Naive thymus-derived CD4-positive, alpha-beta T cell (primary cell): ENCODE measurements at regions of chr9 and their contacts with region 1.

Region 1: DNA sequence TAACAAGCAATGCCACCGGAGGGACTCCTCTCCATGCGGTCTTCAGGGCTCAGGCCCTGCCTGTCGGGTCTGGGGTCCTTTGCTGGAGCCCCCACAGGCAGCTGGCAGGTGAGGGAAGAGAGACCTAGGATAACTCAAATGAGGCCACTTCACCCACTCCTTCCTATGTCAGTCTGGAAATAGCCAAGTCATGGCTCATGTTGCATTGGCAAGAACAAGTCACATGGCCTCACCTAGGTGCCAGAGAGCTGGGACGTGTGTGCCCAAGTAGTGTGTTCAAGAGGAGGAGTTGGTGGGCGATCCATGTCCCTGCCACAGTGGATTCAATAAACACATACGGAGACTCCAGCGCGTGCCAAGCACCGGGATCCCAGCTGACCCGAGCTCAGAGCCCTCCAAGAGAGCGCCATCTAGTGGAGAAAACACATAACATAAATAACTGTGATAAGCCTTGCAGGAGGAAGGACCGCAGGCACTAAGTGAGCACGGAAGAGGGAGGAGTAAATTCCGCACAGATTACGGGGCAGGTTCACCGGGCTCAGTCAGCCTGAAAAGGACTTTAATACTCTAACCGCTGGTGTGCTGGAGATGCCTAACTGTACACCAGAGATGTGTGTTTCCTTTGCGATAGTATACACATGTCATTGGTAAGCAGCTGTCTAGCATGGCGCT is 580.8 kb downstream of the CCDC171 start:
- DNase-seq: peak in 1 of 9 donors; percentile 21
- ATAC-seq: peak; percentile 73
- H3K4me3 ChIP-seq: no peak overlapping the region
- H3K4me3 Mint-ChIP-seq: no peak overlapping the region
- H3K27ac ChIP-seq: no peak overlapping the region
- H3K27ac Mint-ChIP-seq: no peak overlapping the region
- H3K4me1 ChIP-seq: no peaks in the 10 kb centered on the region
- H3K4me1 Mint-ChIP-seq: peaks cover 0 to 4% (median 0%) of the 10 kb centered on the region in 7 donors
- H3K27me3 ChIP-seq: no peaks in the 10 kb centered on the region
- H3K27me3 Mint-ChIP-seq: peaks cover 0 to 17% (median 4%) of the 10 kb centered on the region in 5 donors

Region 2: DNA sequence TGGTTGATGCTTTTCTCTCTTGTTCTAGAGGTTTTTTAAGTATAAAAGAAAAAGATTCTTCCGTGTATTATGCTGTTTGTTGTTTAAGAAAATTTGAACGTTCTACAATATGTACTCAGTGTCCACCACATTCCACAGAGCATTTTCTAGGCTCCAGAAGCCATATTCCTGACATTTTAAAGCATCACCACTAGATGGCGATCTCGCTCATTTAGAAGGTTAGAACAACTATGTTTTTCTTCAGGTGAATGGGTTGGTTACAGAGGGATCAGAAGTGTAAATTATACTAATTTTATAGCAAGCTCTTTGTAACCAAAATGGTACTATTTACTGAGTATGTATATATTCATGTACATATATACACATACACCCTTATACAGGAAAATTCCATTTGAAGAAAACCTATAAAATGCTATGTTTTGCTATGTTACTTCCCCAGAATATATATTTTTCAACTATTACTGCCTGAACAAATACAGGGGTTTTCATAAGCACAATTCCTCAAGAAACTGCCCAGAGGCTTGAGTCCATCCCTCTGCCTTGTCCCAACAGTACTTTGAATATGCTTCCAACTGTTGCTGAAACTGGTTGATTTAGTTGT is 296.5 kb before region 1 on chr9:
- CTCF ChIA-PET with region 1: no interaction called
- POLR2A ChIA-PET with region 1: no interaction called
- intact Hi-C with region 1: loop called in 1 of 2 experiments (anchors 1 kb)
- DNase-seq: peak in 5 of 9 donors; percentile 13 to 41 (median 24)
- ATAC-seq: peak; percentile 50
- H3K4me3 ChIP-seq: no peak overlapping the region
- H3K4me3 Mint-ChIP-seq: no peak overlapping the region
- H3K27ac ChIP-seq: no peak overlapping the region
- H3K27ac Mint-ChIP-seq: no peak overlapping the region
- H3K4me1 ChIP-seq: no peaks in the 10 kb centered on the region
- H3K4me1 Mint-ChIP-seq: peaks cover 0 to 4% (median 0%) of the 10 kb centered on the region in 7 donors
- H3K27me3 ChIP-seq: no peaks in the 10 kb centered on the region
- H3K27me3 Mint-ChIP-seq: no peaks in the 10 kb centered on the region

Region 3: GRCh38 chr9:15873569-15874177 is 260.0 kb before region 1 on chr9:
- CTCF ChIA-PET with region 1: no interaction called
- POLR2A ChIA-PET with region 1: no interaction called
- intact Hi-C with region 1: loop called in 1 of 2 experiments (anchors 1 kb)
- DNase-seq: peak in 5 of 9 donors; percentile 1 to 11 (median 1)
- ATAC-seq: no peak
- H3K4me3 ChIP-seq: no peak overlapping the region
- H3K4me3 Mint-ChIP-seq: no peak overlapping the region
- H3K27ac ChIP-seq: no peak overlapping the region
- H3K27ac Mint-ChIP-seq: no peak overlapping the region
- H3K4me1 ChIP-seq: no peaks in the 10 kb centered on the region
- H3K4me1 Mint-ChIP-seq: no peaks in the 10 kb centered on the region
- H3K27me3 ChIP-seq: no peaks in the 10 kb centered on the region
- H3K27me3 Mint-ChIP-seq: peaks cover 0 to 5% (median 0%) of the 10 kb centered on the region in 5 donors